ENCODE measurements at regions of chr11 and their contacts with region 1.

Region 1: DNA sequence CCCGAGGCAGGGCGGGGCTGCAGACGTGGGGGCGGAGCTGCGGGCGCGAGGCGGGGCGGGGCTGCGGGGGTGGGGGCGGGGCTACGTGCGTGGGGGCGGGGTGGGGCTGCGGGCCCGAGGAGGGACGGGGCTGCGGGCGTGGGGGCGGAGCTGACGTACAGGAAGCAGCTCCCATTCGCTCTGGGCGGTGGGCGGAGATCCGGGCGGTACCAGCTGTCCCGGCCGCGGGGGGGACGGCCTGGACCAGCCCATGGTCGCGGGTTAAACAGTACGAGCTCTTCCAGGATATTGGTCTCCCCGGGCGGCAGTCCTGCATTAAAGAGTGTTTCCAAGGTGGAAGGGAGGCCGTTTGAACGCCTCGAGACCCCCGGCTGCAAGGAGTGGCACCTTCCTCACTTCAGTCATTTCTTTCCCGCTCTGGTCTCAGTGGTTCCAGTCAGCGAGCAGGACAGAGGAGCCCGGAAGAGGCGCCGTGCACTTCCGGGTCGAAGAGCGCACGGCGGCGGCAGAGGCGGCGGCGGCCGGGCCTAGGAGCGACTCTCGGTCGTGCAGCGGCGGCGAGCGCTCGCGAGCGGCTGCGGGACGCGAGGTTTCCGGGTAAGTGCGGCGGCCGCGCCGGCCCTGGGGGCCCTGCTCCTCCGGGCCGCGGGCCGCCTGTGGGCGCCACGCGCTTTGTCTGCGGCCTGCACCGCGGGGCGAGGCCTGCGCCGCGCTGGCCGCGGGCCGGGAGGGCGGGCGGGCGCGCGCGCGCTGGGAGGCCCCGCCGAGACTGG is at the start of gene PHRF1:
- DNase-seq: peak; percentile 98

Region 2: GRCh38 chr11:541414-541885 is 34.7 kb before region 1 on chr11:
- CTCF ChIA-PET with region 1: no interaction called
- POLR2A ChIA-PET with region 1: no interaction called
- DNase-seq: no peak

Region 3: DNA sequence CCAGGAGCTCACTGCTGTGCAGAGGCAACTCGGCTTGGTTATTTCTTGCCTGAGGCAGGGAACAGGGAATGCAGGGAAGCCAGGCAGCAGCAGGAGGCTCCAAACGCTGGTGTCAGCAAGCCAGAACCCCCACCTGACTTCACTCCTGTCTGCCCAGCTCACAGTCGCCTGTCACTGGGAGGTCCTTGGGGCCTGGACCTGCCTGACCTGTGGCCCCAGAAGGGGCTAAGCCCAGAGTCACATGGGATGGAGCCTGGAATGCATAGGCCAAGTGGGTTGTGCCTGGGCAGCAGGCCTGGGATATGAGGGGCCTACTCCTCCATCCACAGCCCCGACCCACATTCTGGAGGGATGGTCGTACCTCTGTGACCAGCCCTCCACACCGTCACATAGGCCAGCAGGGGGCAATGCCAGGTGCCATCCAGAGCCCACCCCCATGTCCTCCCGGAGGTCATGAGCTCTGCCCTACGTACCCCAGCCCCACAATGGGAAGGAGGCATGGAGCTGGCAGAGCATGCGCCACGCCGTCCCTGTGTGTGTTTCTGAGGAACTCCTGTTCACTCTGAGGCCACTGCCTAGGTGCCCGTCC is 10.2 kb before region 1 on chr11:
- CTCF ChIA-PET with region 1: interaction called, 3 read pairs
- POLR2A ChIA-PET with region 1: interaction called, 17 read pairs
- DNase-seq: no peak

Region 4: GRCh38 chr11:606257-606656 is 30.1 kb after region 1 on chr11:
- CTCF ChIA-PET with region 1: no interaction called
- POLR2A ChIA-PET with region 1: no interaction called
- DNase-seq: no peak

Region 5: DNA sequence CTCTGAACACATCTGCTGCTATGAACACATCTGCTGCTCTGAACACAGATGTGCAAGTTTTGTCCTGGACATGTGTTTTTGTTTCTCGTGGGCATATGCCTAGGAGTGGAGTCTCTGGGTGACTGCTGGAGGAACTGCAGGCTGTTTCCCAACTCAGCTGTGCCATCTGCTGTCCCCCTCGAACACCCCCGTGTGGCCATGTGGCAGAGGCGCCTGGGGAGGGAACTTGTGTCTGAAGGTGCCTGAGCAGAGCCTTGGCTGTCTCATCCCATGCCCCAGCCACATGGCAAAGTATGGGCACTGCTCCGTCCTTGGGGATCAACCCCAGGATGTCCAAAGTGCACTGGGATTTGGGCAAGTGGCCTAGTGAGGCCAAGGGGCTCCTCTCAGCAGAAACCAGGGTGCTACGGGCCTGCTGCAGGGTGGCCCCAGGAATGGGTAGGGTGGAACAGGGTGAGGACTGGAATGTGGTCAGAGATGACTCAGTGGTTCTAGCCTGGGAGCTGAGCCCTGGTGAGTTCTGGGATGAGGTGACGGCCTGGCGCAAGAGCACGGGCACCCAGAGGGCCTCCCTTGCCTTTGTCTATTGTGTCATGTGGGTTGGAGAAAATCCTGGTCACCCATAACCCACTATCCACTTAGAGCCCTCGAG is 186.4 kb after region 1 on chr11:
- CTCF ChIA-PET with region 1: no interaction called
- POLR2A ChIA-PET with region 1: no interaction called
- DNase-seq: no peak

Region 6: DNA sequence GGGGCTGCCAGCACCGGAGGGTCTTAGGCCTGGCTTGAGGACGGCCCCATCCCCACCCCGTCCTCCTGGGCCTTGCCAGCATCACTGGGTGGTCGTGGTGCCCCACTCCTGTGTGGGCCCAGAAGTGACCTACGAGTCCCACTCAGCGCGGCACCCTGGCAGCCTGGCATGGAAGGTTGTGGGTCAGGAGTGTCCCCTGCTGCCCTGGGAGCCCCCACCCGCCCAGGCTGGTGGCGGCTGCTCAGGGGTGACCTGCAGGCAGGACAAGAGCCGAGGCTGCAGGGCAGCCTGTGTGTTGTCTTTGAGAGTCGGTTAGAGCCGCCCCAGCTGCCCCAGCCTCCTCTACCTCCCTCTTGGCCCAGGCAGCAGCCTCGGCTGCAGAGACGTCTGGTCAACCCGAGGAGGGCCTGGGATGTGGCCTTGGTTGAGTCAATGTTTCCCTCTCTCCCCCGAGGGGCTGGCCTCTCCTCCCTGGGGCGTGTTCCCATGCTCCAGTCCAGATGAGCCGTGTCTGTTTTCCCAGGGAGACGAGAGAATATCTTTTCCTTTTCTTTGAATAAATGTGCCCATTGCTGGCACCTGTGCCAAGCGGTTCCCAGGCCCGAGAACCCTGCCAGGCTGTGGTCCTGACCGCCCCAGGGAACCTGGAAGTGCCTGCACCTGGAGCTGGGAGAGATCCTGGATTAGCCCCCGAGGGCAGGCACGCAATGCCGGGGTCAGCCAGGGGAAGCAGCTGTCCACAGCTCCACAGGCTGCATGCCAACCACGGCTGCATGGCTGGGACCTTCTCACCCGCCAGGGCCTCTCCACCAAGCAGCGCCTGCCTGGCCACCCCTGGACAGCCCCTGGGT is 545.9 kb after region 1 on chr11:
- CTCF ChIA-PET with region 1: no interaction called
- POLR2A ChIA-PET with region 1: no interaction called
- DNase-seq: no peak